ENCODE measurements at regions of chr2 and their contacts with region 1.

Region 1: GRCh38 chr2:216519154-216519762 is 20.6 kb downstream of the RPL37A start:
- DNase-seq: peak; percentile 84

Region 2: DNA sequence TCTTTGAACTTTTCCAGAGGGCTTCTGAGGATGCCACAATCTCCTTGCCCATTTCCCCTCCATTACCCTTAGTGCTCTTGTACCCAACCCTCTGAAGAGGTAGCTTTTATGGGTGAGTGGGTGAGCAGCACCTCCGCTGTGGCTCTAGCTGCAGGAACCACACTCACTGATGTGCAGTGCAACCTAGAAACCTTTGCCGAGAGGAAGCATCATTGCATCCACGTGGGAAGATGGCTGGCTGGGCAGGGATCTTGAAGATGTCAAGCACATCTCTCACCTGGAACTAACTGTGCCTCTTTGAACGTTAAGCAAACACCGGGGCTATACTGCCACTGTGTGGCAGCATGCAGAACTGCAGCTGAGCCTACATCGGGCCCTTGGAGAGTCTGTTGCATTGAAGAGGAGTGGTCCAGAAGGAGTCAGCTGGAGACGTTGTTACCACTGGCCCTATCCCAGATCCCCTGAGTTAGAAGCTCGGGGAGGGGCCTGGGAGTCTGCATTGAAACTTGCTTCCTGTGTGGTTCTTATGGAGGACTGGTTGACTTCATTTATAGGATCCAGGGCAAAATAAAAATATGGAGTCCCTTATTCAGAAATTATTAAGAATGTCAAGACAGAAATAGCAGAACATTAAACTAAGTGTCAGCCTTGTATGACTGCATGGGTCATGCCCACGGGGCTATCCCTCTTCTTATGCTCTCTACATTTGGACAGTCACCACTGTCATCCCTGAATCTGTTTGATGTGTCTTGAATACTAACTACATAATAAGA is 147.4 kb after region 1 on chr2:
- in situ Hi-C with region 1: loop called (anchors 25 kb)
- DNase-seq: peak; percentile 83

Measured in SK-MEL-5 (cell line).